Sigmoid colon (tissue), 7 donors: ENCODE measurements at regions of chr13 and their contacts with region 1.

Region 1: GRCh38 chr13:46721054-46721453 is 75.9 kb downstream of the ESD start:
- DNase-seq: no peak
- H3K4me3 ChIP-seq: no peak overlapping the region
- H3K27ac ChIP-seq: no peak overlapping the region
- H3K4me1 ChIP-seq: peaks cover 0 to 4% (median 2%) of the 10 kb centered on the region in 4 donors
- H3K27me3 ChIP-seq: no peaks in the 10 kb centered on the region
- CTCF ChIP-seq: peak; percentile 56 to 83 (median 66)
- EP300 ChIP-seq: no peak
- POLR2A ChIP-seq: no peak

Region 2: DNA sequence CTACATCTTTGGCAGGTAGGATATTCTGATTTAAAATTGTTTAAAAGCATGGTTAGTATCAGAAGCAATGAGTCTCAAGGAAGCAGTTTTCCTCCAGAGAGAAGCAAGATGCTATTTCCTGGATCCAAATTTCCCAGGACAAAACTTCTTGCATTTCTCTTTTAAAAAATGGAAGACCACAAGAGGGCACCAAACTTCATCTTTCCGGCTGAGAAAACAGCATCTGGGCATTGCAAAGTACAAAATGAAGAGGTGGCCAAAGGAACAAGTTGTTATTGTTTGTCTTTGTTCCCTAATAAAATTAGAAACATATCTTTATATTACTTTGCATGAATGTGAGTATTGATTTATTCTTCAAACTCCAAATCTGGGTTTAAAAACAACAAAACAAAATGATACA is 228.1 kb before region 1 on chr13:
- intact Hi-C with region 1: loop called (anchors 1 kb)
- DNase-seq: no peak
- H3K4me3 ChIP-seq: no peak overlapping the region
- H3K27ac ChIP-seq: no peak overlapping the region
- H3K4me1 ChIP-seq: no peaks in the 10 kb centered on the region
- H3K27me3 ChIP-seq: no peaks in the 10 kb centered on the region
- CTCF ChIP-seq: peak; percentile 24 to 63 (median 53)
- EP300 ChIP-seq: no peak
- POLR2A ChIP-seq: no peak

Region 3: GRCh38 chr13:46782691-46783090 is 61.6 kb after region 1 on chr13:
- intact Hi-C with region 1: loop called (anchors 10 kb)
- DNase-seq: no peak
- H3K4me3 ChIP-seq: no peak overlapping the region
- H3K27ac ChIP-seq: no peak overlapping the region
- H3K4me1 ChIP-seq: no peaks in the 10 kb centered on the region
- H3K27me3 ChIP-seq: no peaks in the 10 kb centered on the region
- CTCF ChIP-seq: no peak
- EP300 ChIP-seq: no peak
- POLR2A ChIP-seq: no peak